Activated naive CD4-positive, alpha-beta T cell treated with anti-CD3 and anti-CD28 coated beads for 36 hours (primary cell): ENCODE measurements at regions of chrX and their contacts with region 1.

Region 1: GRCh38 chrX:39772057-39772832 is 325.5 kb downstream of the BCOR start:
- DNase-seq: peak; percentile 87
- H3K4me3 Mint-ChIP-seq: peak overlapping the region; percentile 15
- H3K27ac Mint-ChIP-seq: peak overlapping the region; percentile 83
- H3K4me1 Mint-ChIP-seq: peaks cover 40% of the 10 kb centered on the region
- H3K27me3 Mint-ChIP-seq: no peaks in the 10 kb centered on the region

Region 2: GRCh38 chrX:39261446-39262147 is 510.6 kb before region 1 on chrX:
- CTCF ChIA-PET with region 1: no interaction called
- intact Hi-C with region 1: loop called (anchors 5 kb)
- DNase-seq: peak; percentile 40
- H3K4me3 Mint-ChIP-seq: no peak overlapping the region
- H3K27ac Mint-ChIP-seq: peak overlapping the region; percentile 78
- H3K4me1 Mint-ChIP-seq: peaks cover 49% of the 10 kb centered on the region
- H3K27me3 Mint-ChIP-seq: no peaks in the 10 kb centered on the region

Region 3: GRCh38 chrX:39578354-39578869 is 193.8 kb before region 1 on chrX:
- CTCF ChIA-PET with region 1: no interaction called
- intact Hi-C with region 1: loop called (anchors 2 kb)
- DNase-seq: peak; percentile 84
- H3K4me3 Mint-ChIP-seq: peak overlapping the region; percentile 29
- H3K27ac Mint-ChIP-seq: peak overlapping the region; percentile 89
- H3K4me1 Mint-ChIP-seq: peaks cover 23% of the 10 kb centered on the region
- H3K27me3 Mint-ChIP-seq: no peaks in the 10 kb centered on the region

Region 4: DNA sequence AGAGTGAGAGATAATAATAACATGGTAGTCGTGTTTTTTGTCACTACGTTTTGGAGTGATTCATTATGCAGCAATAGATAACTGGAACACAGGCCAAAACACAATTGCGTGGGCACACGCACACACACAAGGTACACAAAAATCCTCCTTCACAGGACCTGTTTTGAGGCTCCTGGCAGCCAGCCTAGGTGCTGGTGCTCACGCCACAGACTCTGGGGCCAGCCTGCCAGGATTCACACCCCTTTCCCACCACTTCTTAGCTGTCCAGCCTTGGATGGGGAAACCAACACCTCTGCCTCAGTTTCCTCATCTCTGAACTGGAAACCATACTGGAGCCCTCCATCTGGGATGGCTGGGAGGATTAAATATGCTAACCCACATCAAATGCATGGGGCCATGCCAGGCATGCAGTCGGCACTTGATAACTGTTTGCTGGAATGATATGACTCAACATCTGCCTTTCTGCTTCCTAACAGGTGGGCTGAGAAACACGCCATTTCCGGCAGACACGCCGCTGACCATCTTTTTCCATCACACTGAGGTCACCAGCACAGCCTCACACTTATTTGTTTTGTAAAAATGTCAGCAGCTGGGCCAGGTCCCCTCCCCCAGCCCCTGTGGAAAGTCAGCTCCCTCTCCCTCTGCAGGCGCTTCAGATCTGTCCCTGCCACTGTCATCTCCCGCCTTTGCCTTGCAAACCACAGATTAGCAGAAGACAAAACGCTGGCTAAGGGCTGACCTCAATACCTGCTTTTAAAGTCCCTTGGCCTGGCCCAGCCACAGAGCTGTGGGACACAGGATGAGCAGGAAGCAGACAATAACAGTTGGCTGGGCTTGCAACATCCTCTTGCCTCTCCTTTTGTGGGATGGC is 88.0 kb after region 1 on chrX:
- CTCF ChIA-PET with region 1: interaction called, 5 read pairs
- intact Hi-C with region 1: loop called (anchors 1 kb)
- DNase-seq: peak; percentile 94
- H3K4me3 Mint-ChIP-seq: peak overlapping the region; percentile 9
- H3K27ac Mint-ChIP-seq: peak overlapping the region; percentile 97
- H3K4me1 Mint-ChIP-seq: peaks cover 53% of the 10 kb centered on the region
- H3K27me3 Mint-ChIP-seq: no peaks in the 10 kb centered on the region

Region 5: GRCh38 chrX:40022421-40022820 is 250.2 kb after region 1 on chrX:
- CTCF ChIA-PET with region 1: no interaction called
- intact Hi-C with region 1: loop called (anchors 1 kb)
- DNase-seq: peak; percentile 16
- H3K4me3 Mint-ChIP-seq: no peak overlapping the region
- H3K27ac Mint-ChIP-seq: no peak overlapping the region
- H3K4me1 Mint-ChIP-seq: peaks cover 14% of the 10 kb centered on the region
- H3K27me3 Mint-ChIP-seq: no peaks in the 10 kb centered on the region

Region 6: DNA sequence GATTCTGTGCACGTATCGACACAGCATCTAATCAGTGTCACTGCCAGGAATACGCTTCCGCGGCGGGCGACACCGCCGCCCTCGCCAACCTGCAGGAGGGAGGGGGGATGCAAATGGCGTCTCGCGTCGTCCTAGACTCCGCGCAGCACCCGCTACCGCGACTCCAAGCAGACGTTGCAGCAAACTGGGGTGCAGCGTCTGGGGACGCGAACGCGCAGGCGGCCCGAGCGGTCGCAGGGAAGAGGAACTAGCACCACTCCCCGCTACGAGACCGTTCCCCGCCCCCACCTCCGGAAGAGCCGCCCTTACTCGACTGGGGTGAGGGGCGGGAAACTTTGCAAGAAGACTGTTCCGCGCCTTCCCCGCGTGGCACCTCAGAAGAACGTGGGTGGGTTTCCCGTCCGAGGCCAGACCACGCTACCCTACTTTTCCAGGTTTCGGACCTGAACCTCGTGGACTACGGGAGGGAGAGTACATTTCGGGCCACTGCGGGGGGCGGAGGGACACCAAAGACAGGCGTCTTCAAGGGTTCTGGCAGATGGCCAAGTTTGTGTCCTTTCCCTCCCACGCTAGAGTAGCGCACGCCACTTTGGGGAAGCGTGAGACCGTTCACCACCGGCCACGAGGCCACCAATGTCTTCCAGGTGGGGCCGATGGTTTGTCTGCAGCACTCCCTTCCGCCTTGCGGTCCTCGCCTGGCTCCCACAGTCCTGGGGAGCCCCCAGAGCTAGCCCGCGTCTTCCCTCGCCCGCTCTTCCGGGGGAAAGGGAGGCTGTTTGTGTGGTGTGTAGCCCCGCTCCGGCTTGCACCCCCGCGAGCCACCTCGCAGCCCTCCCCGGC is 403.5 kb after region 1 on chrX:
- CTCF ChIA-PET with region 1: no interaction called
- intact Hi-C with region 1: loop called (anchors 2 kb)
- DNase-seq: peak; percentile 72
- H3K4me3 Mint-ChIP-seq: peak overlapping the region; percentile 91
- H3K27ac Mint-ChIP-seq: peak overlapping the region; percentile 99
- H3K4me1 Mint-ChIP-seq: peaks cover 23% of the 10 kb centered on the region
- H3K27me3 Mint-ChIP-seq: no peaks in the 10 kb centered on the region

Region 7: DNA sequence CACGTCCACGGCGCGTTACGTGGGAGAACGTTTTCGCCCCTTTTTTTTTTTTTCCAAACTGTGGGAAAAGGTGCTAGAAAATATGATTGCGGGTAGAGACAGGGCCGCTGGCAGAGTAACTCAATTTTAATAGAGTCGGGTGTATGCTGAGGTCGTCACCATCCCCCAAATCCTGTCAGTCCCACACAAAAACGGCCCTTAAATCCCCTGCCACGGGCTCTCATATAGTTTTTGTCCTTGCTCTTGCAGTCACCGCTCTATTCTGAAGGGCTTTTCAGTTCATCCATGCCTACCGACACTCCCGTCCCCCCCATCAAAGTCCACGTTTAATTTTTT is 963.9 kb after region 1 on chrX:
- CTCF ChIA-PET with region 1: no interaction called
- intact Hi-C with region 1: no loop called
- DNase-seq: no peak
- H3K4me3 Mint-ChIP-seq: peak overlapping the region; percentile 85
- H3K27ac Mint-ChIP-seq: peak overlapping the region; percentile 97
- H3K4me1 Mint-ChIP-seq: peaks cover 39% of the 10 kb centered on the region
- H3K27me3 Mint-ChIP-seq: no peaks in the 10 kb centered on the region

Region 8: DNA sequence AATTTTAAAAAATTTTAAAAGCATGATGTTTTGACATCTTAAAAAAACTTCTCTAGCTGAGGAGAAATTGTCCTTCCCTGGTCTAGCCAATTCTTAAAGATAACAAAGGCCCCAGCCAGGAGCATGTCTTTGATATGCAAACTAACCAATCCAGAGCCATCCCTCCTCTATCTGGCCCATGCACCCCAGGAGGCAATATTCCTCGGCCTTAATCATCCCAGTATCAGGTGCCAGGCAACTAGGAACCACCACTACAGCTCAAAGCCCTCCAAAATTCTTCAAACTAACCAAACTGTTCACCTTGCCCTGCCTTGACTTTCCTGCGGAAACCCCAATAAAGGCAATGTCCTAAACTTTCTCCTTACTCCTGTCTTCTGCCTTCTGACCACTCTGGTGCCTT is 1215.2 kb after region 1 on chrX:
- CTCF ChIA-PET with region 1: no interaction called
- intact Hi-C with region 1: no loop called
- DNase-seq: no peak
- H3K4me3 Mint-ChIP-seq: no peak overlapping the region
- H3K27ac Mint-ChIP-seq: no peak overlapping the region
- H3K4me1 Mint-ChIP-seq: no peaks in the 10 kb centered on the region
- H3K27me3 Mint-ChIP-seq: no peaks in the 10 kb centered on the region